ENCODE measurements at regions of chr18 and their contacts with region 1.

Region 1: GRCh38 chr18:11149441-11150270 is at the start of gene PIEZO2:
- DNase-seq: peak; percentile 29 to 36
- ATAC-seq: peak; percentile 50 to 81 (median 67)
- H3K4me3 ChIP-seq: peak within 1 kb of the TSS; percentile 4 to 53 (median 40)
- H3K27ac ChIP-seq: no peak within 1 kb of the TSS
- H3K4me1 ChIP-seq: peaks cover 0 to 28% (median 15%) of the 10 kb centered on the region in 9 donors
- H3K27me3 ChIP-seq: peaks cover 20 to 85% (median 70%) of the 10 kb centered on the region in 7 donors
- CTCF ChIP-seq: no peak
- total RNA-seq, gene PIEZO2: 0.11 to 1.4 (median 0.26) TPM in 9 of 10 donors, not detected in the other

Region 2: DNA sequence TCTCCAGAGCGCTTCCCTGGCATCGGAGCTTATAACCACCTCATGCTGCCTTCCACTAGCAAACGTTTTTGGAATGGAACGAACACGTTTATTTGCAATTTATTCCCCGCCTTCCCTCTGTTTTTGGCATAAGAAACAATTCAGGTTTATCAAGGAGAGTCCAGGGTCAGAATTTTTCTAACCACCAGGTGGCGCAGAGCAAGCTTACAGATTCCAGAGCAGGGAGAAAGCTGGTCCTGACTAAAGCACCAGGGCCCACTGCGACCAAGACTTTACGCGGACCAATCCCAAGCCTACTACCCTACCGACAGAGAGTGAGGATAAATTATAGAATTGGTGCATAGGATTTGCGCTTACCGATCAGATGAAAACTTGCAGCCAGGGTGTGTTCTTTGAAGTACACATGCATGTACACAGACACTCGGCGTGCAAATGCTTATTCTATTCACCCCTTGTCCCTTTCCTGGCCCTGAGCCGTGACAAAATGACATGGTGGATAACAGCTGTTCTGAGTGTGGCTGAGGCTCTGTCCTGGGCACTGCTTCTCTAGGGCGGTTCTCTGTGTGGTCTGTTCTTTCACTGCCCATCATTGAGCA is 589.1 kb before region 1 on chr18:
- intact Hi-C with region 1: loop called in 7 of 10 experiments (anchors 5 to 10 kb)
- DNase-seq: peak; percentile 39 to 76
- ATAC-seq: peak; percentile 68 to 85 (median 79)
- H3K4me3 ChIP-seq: peak overlapping the region in 7 of 10 donors; percentile 13 to 45 (median 37)
- H3K27ac ChIP-seq: peak overlapping the region in 3 of 10 donors; percentile 31 to 57 (median 46)
- H3K4me1 ChIP-seq: peaks cover 0 to 18% (median 12%) of the 10 kb centered on the region in 9 donors
- H3K27me3 ChIP-seq: no peaks in the 10 kb centered on the region
- CTCF ChIP-seq: peak; percentile 64 to 82 (median 77)

Region 3: DNA sequence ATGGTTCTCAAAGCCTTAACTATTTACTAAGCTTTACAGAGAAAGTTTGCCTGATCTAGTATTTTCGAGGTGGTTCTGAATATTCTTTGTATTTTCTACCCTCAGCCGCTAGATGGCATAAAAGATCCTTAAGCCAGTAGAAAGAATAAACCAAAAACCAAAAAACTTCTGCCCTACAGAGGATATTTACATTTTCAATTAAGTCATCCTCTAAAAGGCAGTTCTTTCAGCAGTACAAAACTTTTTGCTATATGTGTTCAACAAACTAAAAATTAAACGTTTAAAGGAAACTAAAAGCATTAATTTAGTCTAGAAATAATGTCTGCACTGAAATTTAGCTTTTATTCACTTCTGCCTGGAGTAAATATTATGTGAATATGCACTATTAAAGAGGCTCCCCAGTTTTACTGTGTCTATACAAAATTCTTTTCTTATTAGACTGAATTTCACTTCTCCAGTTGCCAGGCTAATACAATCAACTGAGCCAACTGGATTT is 297.8 kb before region 1 on chr18:
- intact Hi-C with region 1: loop called in 9 of 10 experiments (anchors 5 to 10 kb)
- DNase-seq: no peak
- ATAC-seq: no peak
- H3K4me3 ChIP-seq: no peak overlapping the region
- H3K27ac ChIP-seq: no peak overlapping the region
- H3K4me1 ChIP-seq: no peaks in the 10 kb centered on the region
- H3K27me3 ChIP-seq: peaks cover 0 to 19% (median 0%) of the 10 kb centered on the region in 7 donors
- CTCF ChIP-seq: peak; percentile 46 to 85 (median 74)

Region 4: GRCh38 chr18:11040823-11041656 is 108.6 kb before region 1 on chr18:
- intact Hi-C with region 1: loop called in 1 of 10 experiments (anchors 10 kb)
- DNase-seq: peak in 1 of 2 donors; percentile 62
- ATAC-seq: peak in 2 of 8 donors; percentile 62 to 72
- H3K4me3 ChIP-seq: no peak overlapping the region
- H3K27ac ChIP-seq: no peak overlapping the region
- H3K4me1 ChIP-seq: peaks cover 0 to 3% (median 0%) of the 10 kb centered on the region in 9 donors
- H3K27me3 ChIP-seq: peaks cover 0 to 12% (median 0%) of the 10 kb centered on the region in 7 donors
- CTCF ChIP-seq: peak; percentile 51 to 83 (median 77)

Region 5: GRCh38 chr18:11237066-11237465 is 87.4 kb after region 1 on chr18:
- intact Hi-C with region 1: no loop called
- DNase-seq: no peak
- ATAC-seq: no peak
- H3K4me3 ChIP-seq: no peak overlapping the region
- H3K27ac ChIP-seq: no peak overlapping the region
- H3K4me1 ChIP-seq: no peaks in the 10 kb centered on the region
- H3K27me3 ChIP-seq: no peaks in the 10 kb centered on the region
- CTCF ChIP-seq: no peak